ENCODE measurements at regions of chr2 and their contacts with region 1.

Region 1: DNA sequence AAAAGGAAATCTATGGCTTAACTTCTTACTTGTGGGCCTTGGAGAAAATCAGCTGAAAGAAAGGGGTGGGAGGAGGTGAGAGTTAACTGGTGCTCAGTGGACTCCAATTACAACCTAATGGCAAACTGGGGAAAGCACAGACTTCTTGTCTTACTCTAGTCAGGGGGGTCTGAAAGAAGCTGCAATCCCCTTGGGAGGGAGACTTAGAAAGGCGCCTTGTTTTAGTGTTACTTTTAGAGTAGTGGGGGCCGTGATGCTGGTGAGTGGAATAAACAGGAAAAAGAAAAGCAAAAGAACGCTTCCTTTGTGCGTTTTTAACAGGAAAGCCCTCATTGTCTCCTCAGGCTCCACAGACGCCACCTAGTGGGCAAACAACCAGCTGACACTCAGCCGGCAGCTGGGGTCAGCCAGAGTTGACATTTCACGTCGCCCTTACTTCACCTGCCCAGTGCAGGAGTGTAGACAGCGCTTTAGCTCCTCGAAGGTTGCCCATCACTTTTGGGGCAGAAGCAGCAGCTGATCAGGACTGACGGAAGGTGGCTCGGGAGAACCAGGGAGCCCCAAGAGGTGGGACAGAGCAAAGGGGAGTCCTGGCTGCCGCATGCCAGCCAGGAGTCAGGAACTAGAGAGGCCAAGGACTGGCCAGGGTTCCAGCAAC is 55.9 kb upstream of the GORASP2 start:
- DNase-seq: peak; percentile 87
- H3K4me3 Mint-ChIP-seq: peak overlapping the region; percentile 53
- H3K27ac Mint-ChIP-seq: no peak overlapping the region
- H3K4me1 Mint-ChIP-seq: peaks cover 12% of the 10 kb centered on the region
- H3K27me3 Mint-ChIP-seq: no peaks in the 10 kb centered on the region

Region 2: DNA sequence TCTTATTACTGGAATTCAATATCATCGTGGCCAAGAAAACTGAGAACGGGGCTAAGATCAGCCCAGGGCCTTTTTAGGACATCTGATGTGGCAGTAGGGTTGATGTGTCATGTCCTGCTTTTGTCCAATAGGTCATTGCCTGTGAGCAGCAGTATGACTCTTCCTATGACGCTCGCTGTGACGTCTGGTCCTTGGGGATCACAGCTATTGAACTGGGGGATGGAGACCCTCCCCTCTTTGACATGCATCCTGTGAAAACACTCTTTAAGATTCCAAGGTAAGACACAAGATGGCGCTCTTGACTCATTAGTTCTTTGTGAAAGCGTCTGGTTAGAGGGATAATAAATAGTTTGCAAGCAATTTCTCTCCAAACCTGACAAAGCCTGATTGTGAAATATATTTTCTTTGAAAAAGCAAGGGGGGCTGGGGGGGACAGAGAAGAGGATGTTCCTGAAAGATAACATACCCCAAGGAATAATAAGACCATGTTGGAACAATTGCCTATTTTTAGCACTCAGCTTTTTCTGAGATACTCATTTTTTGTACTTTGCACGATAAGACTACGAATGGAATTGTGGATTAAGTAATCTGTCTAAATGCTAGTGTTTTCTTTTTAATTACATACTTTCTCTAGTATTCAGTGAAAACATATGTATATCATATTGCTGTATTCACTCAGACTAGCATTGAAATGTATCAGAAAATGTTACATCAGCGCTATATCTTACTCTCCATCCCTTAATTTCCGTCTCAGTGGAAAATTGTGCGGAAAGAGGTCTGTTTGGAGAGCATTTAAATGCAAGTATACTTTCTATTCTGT is 637.1 kb before region 1 on chr2:
- CTCF ChIA-PET with region 1: interaction called, 7 read pairs
- intact Hi-C with region 1: loop called (anchors 2 kb)
- DNase-seq: peak; percentile 31
- H3K4me3 Mint-ChIP-seq: no peak overlapping the region
- H3K27ac Mint-ChIP-seq: no peak overlapping the region
- H3K4me1 Mint-ChIP-seq: no peaks in the 10 kb centered on the region
- H3K27me3 Mint-ChIP-seq: peaks cover 13% of the 10 kb centered on the region

Region 3: GRCh38 chr2:170361090-170361936 is 511.9 kb before region 1 on chr2:
- CTCF ChIA-PET with region 1: interaction called, 8 read pairs
- intact Hi-C with region 1: loop called (anchors 5 kb)
- DNase-seq: peak; percentile 77
- H3K4me3 Mint-ChIP-seq: no peak overlapping the region
- H3K27ac Mint-ChIP-seq: no peak overlapping the region
- H3K4me1 Mint-ChIP-seq: peaks cover 28% of the 10 kb centered on the region
- H3K27me3 Mint-ChIP-seq: peaks cover 6% of the 10 kb centered on the region

Region 4: DNA sequence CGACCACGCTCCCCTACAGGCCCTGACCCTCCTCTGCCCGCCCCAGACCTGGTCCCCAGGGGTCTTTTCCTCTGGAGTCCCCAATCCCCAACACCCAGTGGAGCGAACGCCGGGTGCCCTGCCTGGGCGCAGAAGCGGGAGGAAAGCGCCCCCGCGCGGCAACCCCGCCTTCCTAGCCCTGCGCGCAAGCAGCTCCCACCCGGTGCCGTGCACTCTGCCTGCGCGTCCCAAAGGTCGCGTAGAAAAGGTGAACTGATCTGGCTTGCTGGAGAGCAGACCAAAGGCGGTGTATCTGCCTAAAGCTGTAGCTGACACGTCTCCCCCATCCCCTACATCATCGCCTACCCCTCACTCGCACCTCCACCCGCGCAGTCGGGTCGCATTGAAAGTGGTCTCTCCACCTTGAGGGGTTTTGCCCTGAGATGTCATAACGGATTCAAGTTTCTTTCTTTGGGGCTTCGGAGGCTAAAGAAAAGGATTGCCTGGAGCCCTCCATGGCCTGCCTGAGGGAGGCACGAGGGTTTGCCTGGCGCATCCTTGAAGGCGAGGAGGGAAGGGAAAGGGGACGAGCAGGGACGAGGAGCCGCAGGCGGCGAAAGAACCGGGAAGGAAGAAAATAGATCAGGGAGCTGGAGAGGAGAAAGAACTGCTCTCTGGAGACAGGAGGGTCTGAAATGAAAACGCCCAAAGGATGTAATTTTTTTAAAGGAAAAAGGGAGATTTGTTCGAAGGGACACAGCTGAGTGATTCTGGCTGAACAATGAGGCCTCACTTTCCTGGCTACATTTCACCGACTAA is 50.7 kb before region 1 on chr2:
- CTCF ChIA-PET with region 1: interaction called, 11 read pairs
- intact Hi-C with region 1: loop called (anchors 2 kb)
- DNase-seq: peak; percentile 62
- H3K4me3 Mint-ChIP-seq: peak overlapping the region; percentile 27
- H3K27ac Mint-ChIP-seq: no peak overlapping the region
- H3K4me1 Mint-ChIP-seq: peaks cover 41% of the 10 kb centered on the region
- H3K27me3 Mint-ChIP-seq: peaks cover 79% of the 10 kb centered on the region

Region 5: DNA sequence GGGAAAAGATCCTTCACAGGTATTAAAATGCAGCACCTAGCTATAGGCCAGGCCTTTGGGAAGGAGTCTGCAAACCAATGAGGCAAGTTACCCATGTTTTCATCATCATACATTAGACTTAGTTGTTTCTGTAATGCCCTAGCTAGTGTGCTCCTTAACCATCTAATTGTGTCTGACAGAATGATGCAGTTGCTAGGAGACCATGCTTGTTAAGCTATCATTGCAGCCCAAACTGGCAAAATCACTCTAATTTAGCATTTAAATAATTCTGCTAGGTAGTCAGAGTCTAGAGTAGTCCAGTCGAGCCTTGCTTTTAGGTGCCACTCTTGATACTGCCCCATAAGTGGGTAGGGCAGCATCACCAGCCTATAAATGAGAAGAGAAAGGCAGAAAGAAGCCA is 21.5 kb before region 1 on chr2:
- CTCF ChIA-PET with region 1: interaction called, 10 read pairs
- intact Hi-C with region 1: no loop called
- DNase-seq: no peak
- H3K4me3 Mint-ChIP-seq: no peak overlapping the region
- H3K27ac Mint-ChIP-seq: no peak overlapping the region
- H3K4me1 Mint-ChIP-seq: no peaks in the 10 kb centered on the region
- H3K27me3 Mint-ChIP-seq: no peaks in the 10 kb centered on the region

Region 6: DNA sequence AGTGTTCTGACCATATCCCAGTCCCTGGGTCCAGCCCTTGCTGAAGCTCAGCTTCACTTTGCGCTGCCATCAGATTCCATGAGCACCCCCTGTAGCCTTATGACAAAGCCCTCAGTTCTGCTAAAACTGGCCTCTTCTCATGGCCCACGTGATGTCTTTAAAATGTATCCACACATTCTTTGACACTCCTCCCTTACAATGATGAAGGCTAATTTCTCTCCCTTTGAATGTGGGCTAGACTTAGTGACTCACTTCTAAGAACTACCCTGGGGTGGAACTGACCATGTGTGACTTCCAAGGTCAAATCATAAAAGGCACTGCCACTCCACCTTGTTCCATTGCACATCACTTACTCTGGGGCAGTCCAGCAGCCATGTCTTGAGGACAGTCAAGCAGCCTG is 10.5 kb after region 1 on chr2:
- CTCF ChIA-PET with region 1: interaction called, 13 read pairs
- intact Hi-C with region 1: no loop called
- DNase-seq: no peak
- H3K4me3 Mint-ChIP-seq: no peak overlapping the region
- H3K27ac Mint-ChIP-seq: no peak overlapping the region
- H3K4me1 Mint-ChIP-seq: no peaks in the 10 kb centered on the region
- H3K27me3 Mint-ChIP-seq: peaks cover 6% of the 10 kb centered on the region

Measured in activated naive CD4-positive, alpha-beta T cell treated with anti-CD3 and anti-CD28 coated beads for 36 hours (primary cell).